ENCODE measurements at regions of chr2 and their contacts with region 1.

Region 1: DNA sequence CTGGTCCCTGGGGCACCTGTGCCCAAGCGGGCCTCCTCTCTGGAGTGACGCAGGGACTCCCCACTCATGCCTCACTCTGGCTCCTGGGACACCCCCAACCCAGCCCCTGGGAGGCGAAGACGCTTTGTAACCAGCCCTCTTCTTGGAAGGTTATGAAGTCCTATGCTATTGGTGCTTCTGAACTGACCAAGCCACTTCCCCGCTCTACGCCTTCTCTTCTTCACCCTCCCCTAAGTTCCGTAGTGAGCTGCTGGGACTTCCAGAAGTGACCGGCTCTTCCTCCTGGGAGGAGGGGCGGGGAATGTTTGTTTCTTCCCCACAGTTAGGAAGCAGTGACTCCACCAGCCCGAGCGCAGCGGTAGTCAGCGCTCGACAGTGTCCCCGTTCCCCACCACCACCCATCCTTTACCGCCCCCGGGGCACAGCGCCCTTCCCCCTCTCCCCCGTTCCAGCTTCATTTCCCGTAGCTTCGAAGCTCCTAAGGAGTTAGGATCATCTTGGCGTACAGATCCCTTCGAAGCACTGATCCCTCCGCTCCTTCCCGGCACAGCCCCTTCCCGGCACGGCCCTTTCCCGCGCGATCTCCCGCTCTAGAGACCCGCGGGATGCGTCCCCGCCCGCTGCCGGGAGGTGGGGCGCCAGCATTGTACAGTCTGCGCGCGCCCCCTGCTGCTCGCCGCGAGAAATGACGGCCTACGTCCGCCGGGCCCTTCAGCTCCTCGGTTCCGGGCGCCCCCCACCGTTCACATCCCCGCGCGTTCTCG is 25.3 kb upstream of the NOTO start:
- DNase-seq: peak; percentile 88
- H3K4me3 Mint-ChIP-seq: peak overlapping the region; percentile 77
- H3K27ac Mint-ChIP-seq: no peak overlapping the region
- H3K4me1 Mint-ChIP-seq: peaks cover 20% of the 10 kb centered on the region
- H3K27me3 Mint-ChIP-seq: peaks cover 58% of the 10 kb centered on the region

Region 2: GRCh38 chr2:72887754-72888437 is 289.2 kb before region 1 on chr2:
- CTCF ChIA-PET with region 1: interaction called, 20 read pairs
- POLR2A ChIA-PET with region 1: interaction called, 3 read pairs
- DNase-seq: peak; percentile 54
- H3K4me3 Mint-ChIP-seq: peak overlapping the region; percentile 60
- H3K27ac Mint-ChIP-seq: no peak overlapping the region
- H3K4me1 Mint-ChIP-seq: peaks cover 6% of the 10 kb centered on the region
- H3K27me3 Mint-ChIP-seq: peaks cover 48% of the 10 kb centered on the region

Region 3: DNA sequence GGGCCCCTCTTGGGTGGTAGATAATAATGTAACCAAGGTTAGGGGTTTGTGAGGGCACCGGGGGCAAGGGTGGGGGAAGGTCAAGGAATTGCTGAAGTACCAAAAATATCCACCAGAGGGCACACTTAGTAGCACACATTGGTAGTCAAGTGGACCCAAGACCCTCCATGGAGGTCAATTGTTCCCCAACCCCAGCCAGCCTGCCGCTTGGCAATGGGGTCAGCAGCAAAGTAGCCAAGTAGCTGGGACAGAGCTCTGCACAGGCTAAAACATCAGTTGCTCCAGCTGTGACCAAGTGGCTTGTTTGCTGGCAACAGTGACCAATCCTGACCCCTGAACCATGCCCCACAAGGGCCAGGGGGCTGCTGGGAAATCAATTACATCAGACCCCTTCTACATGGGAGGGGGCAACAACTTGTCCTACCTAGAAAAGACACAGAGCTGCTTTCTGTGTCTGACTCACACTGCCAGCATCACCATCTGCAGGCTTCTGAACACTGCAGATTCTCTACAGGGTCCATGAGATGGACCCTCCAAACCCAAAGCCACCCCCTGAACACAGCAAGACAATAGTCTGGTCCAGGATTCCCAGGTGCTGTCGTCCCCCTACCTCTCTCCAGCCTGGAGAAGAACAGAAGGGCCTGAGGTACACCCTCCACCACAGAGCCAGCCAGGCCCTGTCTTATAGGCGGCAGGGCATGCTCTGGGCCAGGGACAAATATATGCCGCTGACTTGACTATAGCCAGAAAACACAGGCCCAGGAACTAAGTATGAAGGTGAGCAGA is 183.7 kb before region 1 on chr2:
- CTCF ChIA-PET with region 1: interaction called, 23 read pairs
- POLR2A ChIA-PET with region 1: no interaction called
- DNase-seq: peak; percentile 37
- H3K4me3 Mint-ChIP-seq: no peak overlapping the region
- H3K27ac Mint-ChIP-seq: no peak overlapping the region
- H3K4me1 Mint-ChIP-seq: no peaks in the 10 kb centered on the region
- H3K27me3 Mint-ChIP-seq: no peaks in the 10 kb centered on the region

Region 4: DNA sequence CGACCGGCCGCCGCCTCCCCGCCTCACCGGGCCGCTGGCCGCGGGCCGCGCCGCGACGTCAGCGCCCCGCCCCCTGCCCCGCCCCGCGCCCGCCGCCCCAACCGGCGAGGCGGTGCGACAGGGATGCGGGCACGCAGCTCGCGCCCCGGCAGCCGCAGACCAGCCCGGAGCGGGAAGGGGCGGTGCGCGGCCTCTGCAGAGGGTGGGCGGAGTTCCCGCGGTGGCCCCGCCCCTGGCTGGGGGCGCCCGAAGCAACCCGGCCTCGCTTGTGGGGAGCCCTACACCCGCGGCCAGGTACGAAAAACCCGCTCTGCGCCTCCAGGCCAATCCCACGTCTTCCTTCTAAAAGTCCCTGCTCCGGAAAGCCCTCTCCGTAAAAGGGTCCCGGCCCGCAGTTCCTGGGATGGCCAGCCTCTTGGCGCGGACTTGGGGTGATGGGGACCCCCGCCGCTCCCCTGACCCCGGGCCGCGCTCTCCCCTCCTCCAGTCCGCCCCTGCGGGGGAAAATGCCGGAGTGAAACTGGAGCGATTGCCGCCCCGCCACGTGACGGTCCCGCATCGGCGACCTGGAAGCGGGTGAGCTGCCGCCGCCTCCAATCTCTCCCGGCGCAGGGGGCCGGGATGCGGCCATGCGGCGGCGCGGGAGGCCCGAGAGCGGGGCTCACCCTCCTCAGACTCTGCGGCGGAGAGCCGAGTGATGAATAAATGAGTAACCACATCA is 64.0 kb before region 1 on chr2 and contains the start of gene RAB11FIP5:
- CTCF ChIA-PET with region 1: interaction called, 15 read pairs
- POLR2A ChIA-PET with region 1: interaction called, 3 read pairs
- DNase-seq: peak; percentile 82
- H3K4me3 Mint-ChIP-seq: peak within 1 kb of the TSS; percentile 87
- H3K27ac Mint-ChIP-seq: peak within 1 kb of the TSS; percentile 72
- H3K4me1 Mint-ChIP-seq: peaks cover 39% of the 10 kb centered on the region
- H3K27me3 Mint-ChIP-seq: peaks cover 3% of the 10 kb centered on the region
- total RNA-seq, gene RAB11FIP5: 22.6 to 24.0 TPM

Region 5: DNA sequence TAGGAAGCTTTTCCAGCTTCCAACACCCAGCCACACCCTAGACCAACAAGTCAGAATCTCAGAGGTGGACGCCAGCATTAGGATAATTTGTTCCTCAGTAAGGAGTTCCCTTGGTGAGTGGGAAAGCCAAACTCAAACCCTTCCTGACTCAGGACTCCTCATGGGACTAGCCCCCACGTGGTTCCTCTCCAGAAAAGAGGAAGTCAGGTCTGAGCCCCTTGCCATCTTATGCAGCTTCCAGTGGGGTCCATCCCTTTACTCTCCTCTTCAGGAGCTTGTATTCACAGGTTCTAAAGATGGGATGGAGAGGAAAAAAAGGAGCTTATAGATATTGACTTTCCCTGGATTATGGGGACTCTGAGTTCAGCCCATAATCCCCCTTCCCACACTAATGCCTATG is 10.5 kb after region 1 on chr2:
- CTCF ChIA-PET with region 1: interaction called, 19 read pairs
- POLR2A ChIA-PET with region 1: no interaction called
- DNase-seq: no peak
- H3K4me3 Mint-ChIP-seq: no peak overlapping the region
- H3K27ac Mint-ChIP-seq: no peak overlapping the region
- H3K4me1 Mint-ChIP-seq: no peaks in the 10 kb centered on the region
- H3K27me3 Mint-ChIP-seq: peaks cover 27% of the 10 kb centered on the region

Region 6: DNA sequence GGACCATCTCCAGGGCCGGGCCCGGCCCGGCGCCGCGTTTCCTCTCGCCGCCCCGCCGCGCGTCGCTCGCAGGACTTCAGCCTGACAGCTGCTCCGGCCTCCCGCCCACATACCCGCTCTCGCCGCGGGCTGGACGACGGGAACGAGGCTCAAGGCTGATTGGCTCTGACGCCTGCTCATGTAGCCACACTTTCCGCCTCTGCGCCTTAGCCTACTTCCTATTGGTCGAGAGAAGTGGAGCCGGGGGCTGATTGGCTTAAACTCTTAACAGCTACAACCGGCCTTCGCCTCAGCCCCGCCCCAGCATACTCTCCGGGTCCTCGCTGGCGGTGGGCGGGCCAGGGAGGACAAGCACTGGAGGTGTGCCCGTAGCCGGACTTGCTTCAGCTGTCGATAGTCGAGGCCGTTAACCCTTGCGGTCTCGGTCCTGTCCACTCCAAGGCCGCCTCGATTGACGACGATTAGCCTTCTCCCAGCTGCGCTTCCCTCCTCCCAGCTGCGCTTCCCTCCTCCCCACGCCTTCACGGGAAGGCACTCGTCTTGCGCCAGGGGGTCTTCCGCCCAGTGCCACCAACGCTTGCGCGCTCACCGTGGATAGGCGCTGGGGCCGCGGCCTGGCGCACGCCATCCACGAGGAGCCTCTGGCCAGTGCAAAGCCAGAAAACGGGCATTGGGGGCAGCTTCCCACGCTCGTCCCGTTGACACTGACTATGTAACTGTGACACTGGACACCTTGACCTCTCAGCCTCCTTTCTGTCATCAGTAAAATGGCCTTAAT is 56.3 kb after region 1 on chr2 and contains the start of gene PRADC1:
- CTCF ChIA-PET with region 1: interaction called, 12 read pairs
- POLR2A ChIA-PET with region 1: interaction called, 11 read pairs
- DNase-seq: peak; percentile 97
- H3K4me3 Mint-ChIP-seq: peak within 1 kb of the TSS; percentile 86
- H3K27ac Mint-ChIP-seq: peak within 1 kb of the TSS; percentile 75
- H3K4me1 Mint-ChIP-seq: peaks cover 35% of the 10 kb centered on the region
- H3K27me3 Mint-ChIP-seq: no peaks in the 10 kb centered on the region
- total RNA-seq, gene PRADC1: 10.1 to 10.7 TPM

Region 7: DNA sequence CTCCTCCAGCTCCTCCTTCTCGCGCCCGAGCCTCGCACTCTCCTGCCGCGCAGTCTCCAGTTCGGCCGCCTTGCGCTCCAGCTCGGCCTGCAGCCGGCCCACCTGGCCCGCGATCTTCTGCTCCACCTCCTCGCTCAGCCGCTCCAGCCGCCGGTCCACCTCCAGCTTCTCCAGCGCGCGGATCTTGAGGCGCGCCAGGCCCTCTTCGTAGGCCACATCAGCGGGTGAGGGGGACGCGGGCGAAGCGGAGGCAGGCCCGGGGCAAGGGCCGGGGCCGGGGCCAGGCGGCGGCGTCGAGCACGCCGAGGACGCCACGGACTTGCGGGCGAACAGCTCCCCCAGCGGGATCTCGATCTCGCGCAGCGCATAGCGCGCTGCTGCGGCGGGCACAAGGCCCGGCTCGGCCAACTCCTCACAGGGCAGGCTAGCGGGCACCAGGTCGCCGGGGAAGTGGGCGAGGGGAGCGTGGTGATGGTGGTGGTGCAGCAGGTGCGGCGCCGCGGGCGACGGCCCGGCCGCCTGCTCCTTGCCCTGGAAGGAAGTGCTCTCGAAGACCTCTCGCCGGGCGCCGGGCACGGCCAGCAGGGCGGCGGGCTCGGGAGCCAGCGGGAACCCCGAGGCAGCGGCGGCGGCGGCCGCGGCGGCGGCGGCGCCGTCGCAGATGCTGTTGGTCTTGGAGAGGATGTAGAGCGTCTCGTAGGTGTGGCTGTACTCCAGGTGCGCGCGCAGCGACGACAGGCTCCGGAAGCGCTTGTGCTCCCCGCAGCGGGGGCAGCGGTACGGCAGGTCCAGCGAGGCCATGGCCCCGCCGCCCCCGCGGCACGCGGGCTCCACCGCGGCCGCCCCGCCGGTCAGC is 92.0 kb after region 1 on chr2:
- CTCF ChIA-PET with region 1: no interaction called
- POLR2A ChIA-PET with region 1: no interaction called
- DNase-seq: peak; percentile 84
- H3K4me3 Mint-ChIP-seq: peak overlapping the region; percentile 41
- H3K27ac Mint-ChIP-seq: no peak overlapping the region
- H3K4me1 Mint-ChIP-seq: peaks cover 24% of the 10 kb centered on the region
- H3K27me3 Mint-ChIP-seq: no peaks in the 10 kb centered on the region

Measured in activated CD4-positive, alpha-beta memory T cell treated with anti-CD3 and anti-CD28 coated beads, Interleukin-2, amount 10 ng/mL, durations not matched to agents 7 days and 5 days (primary cell).